Caco-2 (cell line): ENCODE measurements at regions of chr14 and their contacts with region 1.

Region 1: GRCh38 chr14:77862154-77862786 is 62.4 kb downstream of the ADCK1 start:
- DNase-seq: peak; percentile 75 to 81
- H3K4me3 ChIP-seq: no peak overlapping the region
- H3K4me3 Mint-ChIP-seq: no peak overlapping the region
- H3K27ac Mint-ChIP-seq: no peak overlapping the region
- H3K4me1 ChIP-seq: no peaks in the 10 kb centered on the region
- H3K4me1 Mint-ChIP-seq: peaks cover 7% of the 10 kb centered on the region
- H3K27me3 ChIP-seq: no peaks in the 10 kb centered on the region
- H3K27me3 Mint-ChIP-seq: no peaks in the 10 kb centered on the region
- CTCF ChIP-seq: peak; percentile 91 to 95

Region 2: GRCh38 chr14:77991128-77991772 is 129.0 kb after region 1 on chr14:
- CTCF ChIA-PET with region 1: no interaction called
- POLR2A ChIA-PET with region 1: no interaction called
- intact Hi-C with region 1: loop called (anchors 1 kb)
- DNase-seq: peak in 1 of 2 experiments; percentile 17
- H3K4me3 ChIP-seq: no peak overlapping the region
- H3K4me3 Mint-ChIP-seq: no peak overlapping the region
- H3K27ac Mint-ChIP-seq: no peak overlapping the region
- H3K4me1 ChIP-seq: no peaks in the 10 kb centered on the region
- H3K4me1 Mint-ChIP-seq: no peaks in the 10 kb centered on the region
- H3K27me3 ChIP-seq: no peaks in the 10 kb centered on the region
- H3K27me3 Mint-ChIP-seq: peaks cover 12% of the 10 kb centered on the region
- CTCF ChIP-seq: no peak

Region 3: GRCh38 chr14:78073652-78074051 is 211.4 kb after region 1 on chr14:
- CTCF ChIA-PET with region 1: no interaction called
- POLR2A ChIA-PET with region 1: no interaction called
- intact Hi-C with region 1: loop called (anchors 2 kb)
- DNase-seq: peak in 1 of 2 experiments; percentile 4
- H3K4me3 ChIP-seq: no peak overlapping the region
- H3K4me3 Mint-ChIP-seq: no peak overlapping the region
- H3K27ac Mint-ChIP-seq: no peak overlapping the region
- H3K4me1 ChIP-seq: no peaks in the 10 kb centered on the region
- H3K4me1 Mint-ChIP-seq: no peaks in the 10 kb centered on the region
- H3K27me3 ChIP-seq: no peaks in the 10 kb centered on the region
- H3K27me3 Mint-ChIP-seq: peaks cover 4% of the 10 kb centered on the region
- CTCF ChIP-seq: no peak

Region 4: DNA sequence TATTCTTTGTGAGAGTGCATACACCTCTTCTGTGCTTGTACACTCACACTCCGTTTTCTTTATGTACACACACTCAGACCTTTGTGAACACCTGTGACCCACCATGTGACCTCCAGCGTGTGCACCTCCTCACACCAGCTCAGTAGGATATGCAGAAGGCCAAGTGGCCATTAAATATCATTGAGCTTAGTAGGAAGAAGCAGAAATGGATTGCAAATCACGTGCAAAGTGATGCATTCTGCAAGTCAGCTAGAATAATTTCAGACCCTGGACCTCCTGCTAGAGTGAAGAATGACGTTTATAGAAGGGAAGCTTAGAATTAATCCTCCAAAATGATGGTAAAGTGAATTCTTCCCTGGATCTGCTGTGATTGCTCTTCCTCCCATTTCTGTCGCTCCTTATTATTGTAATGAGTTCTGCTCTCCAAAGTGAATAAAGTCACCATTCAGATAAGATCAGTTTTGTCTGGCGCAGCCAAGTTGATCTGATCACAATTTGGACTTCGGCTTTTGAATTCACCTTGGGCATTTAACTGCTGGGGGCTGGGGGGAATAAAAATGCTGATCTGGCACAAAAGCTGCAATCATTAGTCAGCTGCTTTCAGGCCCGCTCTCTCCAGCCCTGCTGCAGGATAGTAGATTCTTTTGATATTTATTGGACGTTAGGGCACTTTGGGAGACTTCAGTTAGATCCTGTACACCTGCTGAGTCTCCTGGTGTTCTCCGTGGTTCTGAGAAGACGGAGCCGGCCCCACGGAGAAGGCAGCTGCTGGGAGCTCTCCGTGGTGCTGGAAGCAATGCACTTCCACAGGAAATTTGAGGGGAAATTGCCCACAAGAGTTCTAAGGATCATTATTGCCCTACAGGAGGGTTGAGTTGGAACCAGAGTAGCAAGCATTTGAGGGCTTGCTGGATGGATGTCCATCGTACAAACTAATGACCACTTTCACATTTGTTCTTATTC is 295.5 kb after region 1 on chr14:
- CTCF ChIA-PET with region 1: no interaction called
- POLR2A ChIA-PET with region 1: no interaction called
- intact Hi-C with region 1: loop called (anchors 5 kb)
- DNase-seq: peak in 1 of 2 experiments; percentile 50
- H3K4me3 ChIP-seq: no peak overlapping the region
- H3K4me3 Mint-ChIP-seq: no peak overlapping the region
- H3K27ac Mint-ChIP-seq: no peak overlapping the region
- H3K4me1 ChIP-seq: no peaks in the 10 kb centered on the region
- H3K4me1 Mint-ChIP-seq: no peaks in the 10 kb centered on the region
- H3K27me3 ChIP-seq: no peaks in the 10 kb centered on the region; the same call in 1 of the 2 replicates
- H3K27me3 Mint-ChIP-seq: peaks cover 12% of the 10 kb centered on the region
- CTCF ChIP-seq: no peak